RWPE1 (cell line): ENCODE measurements at regions of chr7 and their contacts with region 1.

Region 1: GRCh38 chr7:154463794-154464193 is 411.6 kb downstream of the DPP6 start:
- DNase-seq: no peak
- H3K27ac ChIP-seq: no peak overlapping the region
- CTCF ChIP-seq: no peak

Region 2: GRCh38 chr7:154390961-154391360 is 72.8 kb before region 1 on chr7:
- CTCF ChIA-PET with region 1: no interaction called
- POLR2A ChIA-PET with region 1: interaction called, 14 read pairs
- DNase-seq: no peak
- H3K27ac ChIP-seq: no peak overlapping the region
- CTCF ChIP-seq: no peak